Activated CD4-positive, alpha-beta T cell treated with anti-CD3 and anti-CD28 coated beads for 36 hours (primary cell): ENCODE measurements at regions of chr7 and their contacts with region 1.

Region 1: GRCh38 chr7:146787266-146787665 is 670.7 kb downstream of the CNTNAP2 start:
- DNase-seq: no peak
- ATAC-seq: no peak
- H3K4me3 Mint-ChIP-seq: peak overlapping the region; percentile 3
- H3K27ac Mint-ChIP-seq: no peak overlapping the region
- H3K4me1 Mint-ChIP-seq: no peaks in the 10 kb centered on the region
- H3K27me3 Mint-ChIP-seq: no peaks in the 10 kb centered on the region

Region 2: GRCh38 chr7:146713205-146713604 is 74.1 kb before region 1 on chr7:
- CTCF ChIA-PET with region 1: no interaction called
- POLR2A ChIA-PET with region 1: no interaction called
- intact Hi-C with region 1: no loop called
- DNase-seq: no peak
- ATAC-seq: no peak
- H3K4me3 Mint-ChIP-seq: no peak overlapping the region
- H3K27ac Mint-ChIP-seq: no peak overlapping the region
- H3K4me1 Mint-ChIP-seq: no peaks in the 10 kb centered on the region
- H3K27me3 Mint-ChIP-seq: no peaks in the 10 kb centered on the region

Region 3: GRCh38 chr7:146755585-146755984 is 31.7 kb before region 1 on chr7:
- CTCF ChIA-PET with region 1: no interaction called
- POLR2A ChIA-PET with region 1: no interaction called
- intact Hi-C with region 1: loop called in 1 of 2 experiments (anchors 2 kb)
- DNase-seq: no peak
- ATAC-seq: no peak
- H3K4me3 Mint-ChIP-seq: no peak overlapping the region
- H3K27ac Mint-ChIP-seq: no peak overlapping the region
- H3K4me1 Mint-ChIP-seq: no peaks in the 10 kb centered on the region
- H3K27me3 Mint-ChIP-seq: no peaks in the 10 kb centered on the region